H1 (cell line): ENCODE measurements at regions of chr1 and their contacts with region 1.

Region 1: GRCh38 chr1:68321084-68321685 is 88.9 kb upstream of the WLS start:
- DNase-seq: peak; percentile 23 to 56
- H3K4me3 ChIP-seq: no peak overlapping the region
- H3K27ac ChIP-seq: no peak overlapping the region
- H3K4me1 ChIP-seq: peaks cover 0 to 5% (median 0%) of the 10 kb centered on the region in 4 experiments; a peak in 1 of 7 replicates
- H3K27me3 ChIP-seq: no peaks in the 10 kb centered on the region; a peak in 1 of 7 replicates
- CTCF ChIP-seq: peak; percentile 72 to 85 (median 78)
- EP300 ChIP-seq: no peak
- POLR2A ChIP-seq: no peak
- RAD21 ChIP-seq: peak; percentile 79 to 82

Region 2: GRCh38 chr1:68162761-68163160 is 158.4 kb before region 1 on chr1:
- CTCF ChIA-PET with region 1: interaction called, 12 read pairs
- POLR2A ChIA-PET with region 1: no interaction called
- DNase-seq: peak in 1 of 2 experiments; percentile 76
- H3K4me3 ChIP-seq: no peak overlapping the region
- H3K27ac ChIP-seq: no peak overlapping the region
- H3K4me1 ChIP-seq: no peaks in the 10 kb centered on the region
- H3K27me3 ChIP-seq: no peaks in the 10 kb centered on the region
- CTCF ChIP-seq: peak; percentile 56 to 76 (median 70)
- EP300 ChIP-seq: no peak
- POLR2A ChIP-seq: no peak
- RAD21 ChIP-seq: peak; percentile 59 to 68

Region 3: GRCh38 chr1:68293609-68294366 is 27.4 kb before region 1 on chr1:
- CTCF ChIA-PET with region 1: interaction called, 10 read pairs
- POLR2A ChIA-PET with region 1: no interaction called
- DNase-seq: peak; percentile 58 to 75
- H3K4me3 ChIP-seq: peak overlapping the region; percentile 0 to 50 (median 16); a peak in 5 of 8 replicates
- H3K27ac ChIP-seq: 0 out of 2 replicates have a peak overlapping the region, but pooled peaks have one; percentile 17
- H3K4me1 ChIP-seq: peaks cover 9 to 19% (median 16%) of the 10 kb centered on the region in 4 experiments
- H3K27me3 ChIP-seq: peaks cover 14 to 56% (median 45%) of the 10 kb centered on the region in 4 experiments
- CTCF ChIP-seq: no peak
- EP300 ChIP-seq: peak in 1 of 2 experiments; percentile 86; a peak in 1 of 3 replicates
- POLR2A ChIP-seq: no peak
- RAD21 ChIP-seq: 0 out of 4 replicates have a peak, but pooled peaks of 1 of the 2 experiments have one; percentile 2

Region 4: GRCh38 chr1:68331117-68331865 is 10.1 kb after region 1 on chr1:
- CTCF ChIA-PET with region 1: interaction called, 19 read pairs
- POLR2A ChIA-PET with region 1: no interaction called
- DNase-seq: no peak
- H3K4me3 ChIP-seq: no peak overlapping the region
- H3K27ac ChIP-seq: no peak overlapping the region
- H3K4me1 ChIP-seq: no peaks in the 10 kb centered on the region
- H3K27me3 ChIP-seq: no peaks in the 10 kb centered on the region
- CTCF ChIP-seq: no peak
- EP300 ChIP-seq: no peak
- POLR2A ChIP-seq: no peak
- RAD21 ChIP-seq: no peak

Region 5: DNA sequence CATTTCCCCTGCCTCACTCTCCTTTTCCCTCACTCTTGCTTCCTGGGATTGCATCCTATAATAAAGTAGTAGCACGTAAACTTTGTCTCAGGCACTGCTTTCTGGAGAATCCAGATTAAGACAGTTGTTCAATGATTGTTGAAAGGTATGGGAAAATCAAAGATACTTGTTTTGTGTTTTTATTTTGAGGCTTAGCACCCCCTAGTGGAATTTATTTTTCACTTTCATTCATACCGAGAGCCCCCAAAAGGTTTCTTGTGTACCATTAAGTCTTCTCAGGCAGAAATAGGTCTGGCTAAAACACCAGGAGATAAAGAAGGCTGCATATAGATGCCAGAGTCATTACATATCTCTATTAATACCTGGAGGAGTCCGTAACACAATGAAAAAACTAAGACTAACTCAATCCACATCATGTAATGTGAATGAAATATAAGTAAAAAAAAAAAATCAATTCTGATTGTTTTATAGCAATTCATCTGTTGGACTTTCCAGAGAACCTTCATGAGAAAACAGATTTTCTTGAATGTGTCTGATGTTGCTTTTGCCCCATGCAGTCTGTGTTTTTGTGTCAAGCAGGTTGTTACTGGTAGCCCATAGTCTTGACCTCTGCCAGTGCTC is 25.1 kb after region 1 on chr1:
- CTCF ChIA-PET with region 1: interaction called, 64 read pairs
- POLR2A ChIA-PET with region 1: no interaction called
- DNase-seq: no peak
- H3K4me3 ChIP-seq: no peak overlapping the region
- H3K27ac ChIP-seq: no peak overlapping the region
- H3K4me1 ChIP-seq: no peaks in the 10 kb centered on the region
- H3K27me3 ChIP-seq: no peaks in the 10 kb centered on the region
- CTCF ChIP-seq: peak in 2 of 3 experiments; percentile 20 to 21; a peak in 2 of 4 replicates
- EP300 ChIP-seq: no peak
- POLR2A ChIP-seq: no peak
- RAD21 ChIP-seq: peak; percentile 37 to 40